H1 (cell line): ENCODE measurements at regions of chr7 and their contacts with region 1.

Region 1: GRCh38 chr7:149460493-149461277 is at the start of gene ZNF777:
- DNase-seq: peak; percentile 33 to 82
- H3K4me3 ChIP-seq: peak within 1 kb of the TSS; percentile 65 to 74 (median 66)
- H3K27ac ChIP-seq: no peak within 1 kb of the TSS
- H3K4me1 ChIP-seq: no peaks in the 10 kb centered on the region; a peak in 1 of 7 replicates
- H3K27me3 ChIP-seq: peaks cover 4 to 25% (median 20%) of the 10 kb centered on the region in 4 experiments
- CTCF ChIP-seq: peak; percentile 38 to 60 (median 50)
- EP300 ChIP-seq: no peak
- POLR2A ChIP-seq: peak; percentile 27 to 46; a peak in 2 of 3 replicates
- RAD21 ChIP-seq: peak in 1 of 2 experiments; percentile 37; a peak in 1 of 4 replicates
- total RNA-seq, gene ZNF777: 10.1 and 11.2 TPM in 2 replicates

Region 2: GRCh38 chr7:149422129-149422913 is 38.4 kb before region 1 on chr7:
- CTCF ChIA-PET with region 1: interaction called, 7 read pairs
- POLR2A ChIA-PET with region 1: interaction called, 27 read pairs
- DNase-seq: peak in 1 of 2 experiments; percentile 83
- H3K4me3 ChIP-seq: peak overlapping the region; percentile 54 to 73 (median 61)
- H3K27ac ChIP-seq: no peak overlapping the region
- H3K4me1 ChIP-seq: peaks cover 0 to 4% (median under 1%) of the 10 kb centered on the region in 4 experiments; a peak in 4 of 7 replicates
- H3K27me3 ChIP-seq: peaks cover 0 to 7% (median 6%) of the 10 kb centered on the region in 4 experiments; a peak in 5 of 7 replicates
- CTCF ChIP-seq: peak; percentile 78 to 98 (median 82)
- EP300 ChIP-seq: no peak
- POLR2A ChIP-seq: peak in 1 of 2 experiments; percentile 46; a peak in 1 of 3 replicates
- RAD21 ChIP-seq: peak; percentile 42 to 56; a peak in 3 of 4 replicates

Region 3: GRCh38 chr7:149474309-149475114 is 13.8 kb after region 1 on chr7:
- CTCF ChIA-PET with region 1: interaction called, 12 read pairs
- POLR2A ChIA-PET with region 1: interaction called, 26 read pairs
- DNase-seq: no peak
- H3K4me3 ChIP-seq: no peak overlapping the region
- H3K27ac ChIP-seq: no peak overlapping the region
- H3K4me1 ChIP-seq: peaks cover 0 to 11% (median 8%) of the 10 kb centered on the region in 4 experiments; a peak in 6 of 7 replicates
- H3K27me3 ChIP-seq: no peaks in the 10 kb centered on the region
- CTCF ChIP-seq: peak; percentile 21 to 39 (median 35)
- EP300 ChIP-seq: no peak
- POLR2A ChIP-seq: no peak
- RAD21 ChIP-seq: peak; percentile 2 to 39; a peak in 2 of 4 replicates